B cell (primary cell): ENCODE measurements at regions of chr10 and their contacts with region 1.

Region 1: GRCh38 chr10:28381903-28382347 is 79.1 kb upstream of the MPP7 start:
- DNase-seq: peak; percentile 88
- ATAC-seq: peak; percentile 94
- H3K4me3 ChIP-seq: no peak overlapping the region
- H3K4me3 Mint-ChIP-seq: no peak overlapping the region
- H3K27ac ChIP-seq: no peak overlapping the region
- H3K27ac Mint-ChIP-seq: no peak overlapping the region
- H3K4me1 ChIP-seq: peaks cover 0 to 5% of the 10 kb centered on the region in 2 donors
- H3K4me1 Mint-ChIP-seq: peaks cover 3% of the 10 kb centered on the region
- H3K27me3 ChIP-seq: peaks cover 0 to 2% (median 0%) of the 10 kb centered on the region in 4 experiments
- H3K27me3 Mint-ChIP-seq: peaks cover 18% of the 10 kb centered on the region
- CTCF ChIP-seq: peak; percentile 98

Region 2: DNA sequence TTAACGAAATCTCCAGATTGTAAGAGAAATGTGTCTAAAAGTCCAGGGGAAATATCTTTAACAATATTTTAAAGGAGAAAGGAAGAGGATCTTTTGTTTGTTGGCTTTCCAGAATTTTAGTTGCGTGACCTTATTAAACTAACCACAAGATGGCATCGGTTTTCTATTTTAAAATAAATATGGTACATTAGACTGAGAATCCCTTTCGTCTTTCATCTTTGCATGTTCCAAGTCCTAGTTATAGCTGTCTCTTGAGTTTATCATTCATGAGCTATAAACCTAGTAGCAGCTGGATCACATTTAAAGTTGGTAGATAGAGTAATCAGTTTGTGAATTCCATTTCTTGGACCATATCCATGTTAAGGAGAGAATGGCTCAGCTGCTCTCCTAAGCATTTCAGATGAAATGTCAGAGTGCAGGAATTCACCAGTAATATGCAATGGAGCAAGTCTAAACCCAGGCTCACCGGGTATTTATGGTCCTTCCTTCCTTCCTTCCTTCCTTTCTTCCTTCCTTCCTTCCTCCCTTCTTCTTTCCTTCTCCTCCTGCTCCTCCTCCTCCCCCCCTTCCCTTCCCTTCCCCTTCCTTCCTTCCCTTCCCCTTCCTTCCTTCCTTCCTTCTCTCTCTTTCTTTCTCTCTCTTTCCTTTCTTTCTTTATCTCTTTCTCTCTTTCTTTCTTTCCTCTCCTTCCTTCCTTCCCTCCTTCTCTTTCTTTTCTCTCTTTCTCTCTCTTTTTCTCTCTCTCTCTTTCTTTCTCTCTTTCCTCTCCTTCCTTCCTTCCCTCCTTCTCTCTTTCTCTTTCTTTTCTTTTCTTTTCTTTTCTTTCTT is 935.6 kb before region 1 on chr10:
- CTCF ChIA-PET with region 1: interaction called, 6 read pairs
- POLR2A ChIA-PET with region 1: no interaction called
- intact Hi-C with region 1: loop called (anchors 1 kb)
- DNase-seq: peak; percentile 34
- ATAC-seq: no peak
- H3K4me3 ChIP-seq: no peak overlapping the region
- H3K4me3 Mint-ChIP-seq: no peak overlapping the region
- H3K27ac ChIP-seq: no peak overlapping the region
- H3K27ac Mint-ChIP-seq: no peak overlapping the region
- H3K4me1 ChIP-seq: no peaks in the 10 kb centered on the region
- H3K4me1 Mint-ChIP-seq: peaks cover 2% of the 10 kb centered on the region
- H3K27me3 ChIP-seq: no peaks in the 10 kb centered on the region
- H3K27me3 Mint-ChIP-seq: peaks cover 3% of the 10 kb centered on the region
- CTCF ChIP-seq: peak; percentile 56

Region 3: DNA sequence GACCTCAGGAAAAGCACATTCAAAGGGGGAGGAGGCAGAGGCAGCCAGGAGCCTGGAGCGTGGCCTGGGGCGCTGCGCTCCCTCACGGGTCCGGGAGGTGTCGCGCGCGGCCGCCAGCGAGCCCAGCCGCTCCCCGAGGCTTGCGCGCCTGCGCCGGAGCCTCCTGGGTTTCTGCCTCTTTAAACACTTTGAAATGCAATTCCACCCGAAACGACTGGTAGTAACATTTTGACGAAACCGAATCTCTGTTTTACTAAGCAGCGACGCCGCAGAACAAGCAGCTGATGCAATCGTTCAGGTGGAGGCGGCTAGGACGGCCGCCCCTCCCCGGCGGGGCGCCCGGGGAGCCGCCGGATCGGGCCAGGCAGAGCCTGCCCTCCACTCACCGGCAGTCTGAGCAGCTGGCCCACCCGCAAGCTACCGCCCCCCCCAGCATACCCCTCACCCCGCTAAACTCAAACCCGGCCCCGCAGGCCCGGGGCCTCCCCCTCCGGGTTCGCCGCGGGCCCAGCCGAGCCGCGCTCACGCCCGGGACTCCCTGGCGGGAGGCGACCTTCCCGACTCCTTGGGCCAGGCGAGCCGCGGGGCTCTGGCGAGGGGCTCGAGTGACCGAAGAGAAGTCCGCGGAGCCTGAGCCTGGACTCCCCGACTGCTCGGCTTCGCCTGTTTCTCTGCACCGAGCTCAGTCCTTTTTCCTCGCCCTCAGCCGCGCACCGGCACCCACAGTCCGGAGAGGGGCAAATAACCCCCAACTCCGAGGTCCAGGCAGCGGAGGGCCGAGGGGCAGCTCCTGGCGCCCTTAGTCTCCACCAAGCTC is 639.5 kb before region 1 on chr10:
- CTCF ChIA-PET with region 1: interaction called, 11 read pairs
- POLR2A ChIA-PET with region 1: no interaction called
- intact Hi-C with region 1: loop called (anchors 2 kb)
- DNase-seq: peak; percentile 67
- ATAC-seq: peak; percentile 86
- H3K4me3 ChIP-seq: peak overlapping the region; percentile 32 to 64 (median 55)
- H3K4me3 Mint-ChIP-seq: peak overlapping the region; percentile 78
- H3K27ac ChIP-seq: no peak overlapping the region
- H3K27ac Mint-ChIP-seq: no peak overlapping the region
- H3K4me1 ChIP-seq: peaks cover 39 to 60% of the 10 kb centered on the region in 2 donors
- H3K4me1 Mint-ChIP-seq: peaks cover 25% of the 10 kb centered on the region
- H3K27me3 ChIP-seq: peaks cover 0 to 69% (median 45%) of the 10 kb centered on the region in 4 experiments
- H3K27me3 Mint-ChIP-seq: peaks cover 53% of the 10 kb centered on the region
- CTCF ChIP-seq: peak; percentile 58

Region 4: DNA sequence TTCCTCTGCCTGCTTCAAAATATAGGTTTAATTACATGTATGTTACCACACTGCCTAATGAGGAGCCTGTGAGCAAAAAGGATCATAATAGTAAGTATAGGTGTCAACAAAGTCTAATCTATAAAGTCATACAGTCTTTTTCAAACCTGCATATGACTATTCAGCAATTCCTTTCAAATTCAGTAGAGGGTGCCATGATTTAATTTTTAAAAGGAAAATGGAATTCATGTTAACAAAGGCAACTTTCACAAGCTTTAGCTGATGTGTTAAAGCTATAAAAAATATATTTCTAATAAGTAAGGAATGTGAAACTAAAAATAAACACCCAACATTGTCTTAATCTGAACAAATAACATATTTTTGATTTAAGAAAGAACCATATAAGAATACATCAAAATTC is 131.1 kb before region 1 on chr10:
- CTCF ChIA-PET with region 1: interaction called, 168 read pairs
- POLR2A ChIA-PET with region 1: interaction called, 4 read pairs
- intact Hi-C with region 1: loop called (anchors 1 kb)
- DNase-seq: peak; percentile 54
- ATAC-seq: no peak
- H3K4me3 ChIP-seq: no peak overlapping the region
- H3K4me3 Mint-ChIP-seq: no peak overlapping the region
- H3K27ac ChIP-seq: no peak overlapping the region
- H3K27ac Mint-ChIP-seq: no peak overlapping the region
- H3K4me1 ChIP-seq: no peaks in the 10 kb centered on the region
- H3K4me1 Mint-ChIP-seq: peaks cover 2% of the 10 kb centered on the region
- H3K27me3 ChIP-seq: peaks cover 0 to 2% (median 0%) of the 10 kb centered on the region in 4 experiments
- H3K27me3 Mint-ChIP-seq: peaks cover 20% of the 10 kb centered on the region
- CTCF ChIP-seq: peak; percentile 71

Region 5: DNA sequence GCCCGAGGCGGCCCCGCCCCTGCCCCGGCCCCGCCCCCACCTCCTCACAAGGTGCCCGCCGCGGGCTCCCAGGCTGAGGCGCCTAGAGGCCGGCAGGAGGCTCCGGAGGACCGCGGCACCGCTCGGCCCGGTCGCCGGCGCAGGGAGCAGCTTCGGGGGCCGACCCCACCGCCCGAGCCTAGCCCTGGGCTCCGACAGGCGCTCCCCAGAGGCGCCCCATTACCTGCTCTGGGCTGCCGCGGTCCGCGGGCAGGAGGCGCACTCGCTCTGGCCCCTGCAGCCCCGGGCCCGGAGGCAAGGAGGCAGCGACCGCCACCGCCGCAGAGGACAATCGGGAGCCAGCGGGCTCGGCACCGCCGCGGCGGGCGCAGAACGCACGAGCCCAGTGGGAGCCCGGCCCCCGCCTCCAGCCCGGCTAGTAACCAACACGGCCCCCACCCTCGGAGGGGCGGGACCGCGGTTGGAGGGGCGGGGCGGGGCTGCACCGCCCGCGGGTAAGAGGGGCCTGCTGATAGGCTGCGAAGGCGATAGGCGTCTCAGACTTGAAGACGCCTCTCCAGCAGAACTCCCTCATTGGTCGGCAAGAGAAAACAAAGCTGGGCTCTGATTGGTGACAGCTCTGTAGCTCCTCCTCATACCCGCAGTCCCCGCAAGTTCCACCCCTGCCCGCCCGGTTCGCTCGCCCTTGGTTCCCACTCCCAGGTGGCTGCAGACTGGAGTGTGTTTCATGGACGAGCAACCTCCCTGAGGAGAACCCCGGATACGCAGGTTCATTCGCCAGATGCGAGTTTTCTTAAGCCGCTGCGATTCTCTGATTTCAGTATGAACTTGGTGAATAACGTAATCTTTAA is 79.1 kb before region 1 on chr10 and contains the start of gene MPP7:
- CTCF ChIA-PET with region 1: interaction called, 146 read pairs
- POLR2A ChIA-PET with region 1: interaction called, 7 read pairs
- intact Hi-C with region 1: loop called (anchors 1 kb)
- DNase-seq: peak; percentile 97
- ATAC-seq: peak; percentile 87
- H3K4me3 ChIP-seq: peak within 1 kb of the TSS; percentile 55 to 96 (median 76)
- H3K4me3 Mint-ChIP-seq: peak within 1 kb of the TSS; percentile 94
- H3K27ac ChIP-seq: peak within 1 kb of the TSS; percentile 66 to 73
- H3K27ac Mint-ChIP-seq: peak within 1 kb of the TSS; percentile 80
- H3K4me1 ChIP-seq: peaks cover 17 to 19% of the 10 kb centered on the region in 2 donors
- H3K4me1 Mint-ChIP-seq: peaks cover 24% of the 10 kb centered on the region
- H3K27me3 ChIP-seq: peaks cover 0 to 29% (median 20%) of the 10 kb centered on the region in 4 experiments
- H3K27me3 Mint-ChIP-seq: peaks cover 33% of the 10 kb centered on the region
- CTCF ChIP-seq: peak; percentile 59
- total RNA-seq, gene MPP7: 13.1 and 13.6 TPM in 2 replicates

Region 6: DNA sequence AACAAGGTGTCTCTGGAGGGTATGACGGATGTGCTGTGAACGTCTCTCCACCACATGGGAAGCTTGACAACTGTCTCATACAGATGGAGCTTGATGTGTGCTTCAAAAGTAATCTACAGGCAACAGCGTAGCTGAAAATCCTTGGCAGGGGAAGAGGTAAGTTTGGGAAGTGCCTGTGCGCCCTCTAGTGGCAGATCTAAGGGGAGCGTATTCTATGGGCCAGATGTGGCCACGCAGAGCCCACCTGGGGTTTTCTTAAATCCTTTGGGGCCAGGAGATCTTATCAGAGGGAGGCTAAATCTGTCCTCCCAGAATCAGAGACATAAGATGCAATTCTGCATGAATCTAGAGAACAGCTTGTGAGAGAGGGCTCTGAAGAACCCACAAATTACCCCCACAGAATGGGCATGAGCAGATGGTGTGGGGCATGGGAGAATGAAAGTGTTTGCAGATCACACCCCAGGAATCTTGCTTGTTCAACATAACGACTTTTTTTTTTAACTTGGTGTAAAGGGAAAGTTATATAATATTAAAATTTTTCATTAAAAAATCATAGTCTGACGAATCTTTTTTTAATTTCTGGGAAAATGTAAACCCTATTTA is 12.1 kb after region 1 on chr10:
- CTCF ChIA-PET with region 1: interaction called, 41 read pairs
- POLR2A ChIA-PET with region 1: no interaction called
- intact Hi-C with region 1: no loop called
- DNase-seq: peak; percentile 73
- ATAC-seq: peak; percentile 66
- H3K4me3 ChIP-seq: no peak overlapping the region
- H3K4me3 Mint-ChIP-seq: no peak overlapping the region
- H3K27ac ChIP-seq: no peak overlapping the region
- H3K27ac Mint-ChIP-seq: no peak overlapping the region
- H3K4me1 ChIP-seq: peaks cover 0 to 5% of the 10 kb centered on the region in 2 donors
- H3K4me1 Mint-ChIP-seq: peaks cover 4% of the 10 kb centered on the region
- H3K27me3 ChIP-seq: no peaks in the 10 kb centered on the region
- H3K27me3 Mint-ChIP-seq: peaks cover 4% of the 10 kb centered on the region
- CTCF ChIP-seq: peak; percentile 97

Region 7: GRCh38 chr10:28644647-28645046 is 262.7 kb after region 1 on chr10:
- CTCF ChIA-PET with region 1: no interaction called
- POLR2A ChIA-PET with region 1: no interaction called
- intact Hi-C with region 1: no loop called
- DNase-seq: no peak
- ATAC-seq: no peak
- H3K4me3 ChIP-seq: no peak overlapping the region
- H3K4me3 Mint-ChIP-seq: no peak overlapping the region
- H3K27ac ChIP-seq: no peak overlapping the region
- H3K27ac Mint-ChIP-seq: no peak overlapping the region
- H3K4me1 ChIP-seq: no peaks in the 10 kb centered on the region
- H3K4me1 Mint-ChIP-seq: no peaks in the 10 kb centered on the region
- H3K27me3 ChIP-seq: peaks cover 0 to 4% (median 0%) of the 10 kb centered on the region in 4 experiments
- H3K27me3 Mint-ChIP-seq: peaks cover 8% of the 10 kb centered on the region
- CTCF ChIP-seq: no peak